Ovary (tissue), 10 donors: ENCODE measurements at regions of chr19 and their contacts with region 1.

Region 1: GRCh38 chr19:531009-531752 is 379 bp upstream of the CDC34 start:
- DNase-seq: peak; percentile 84 to 94 (median 88)
- H3K4me3 ChIP-seq: peak overlapping the region; percentile 60
- H3K27ac ChIP-seq: peak overlapping the region; percentile 74 to 89
- H3K4me1 ChIP-seq: peaks cover 15% of the 10 kb centered on the region
- H3K27me3 ChIP-seq: no peaks in the 10 kb centered on the region
- CTCF ChIP-seq: peak in 2 of 3 donors; percentile 33 to 46
- EP300 ChIP-seq: no peak
- POLR2A ChIP-seq: no peak

Region 2: GRCh38 chr19:570937-571565 is 39.9 kb after region 1 on chr19:
- intact Hi-C with region 1: loop called in 2 of 4 experiments (anchors 2 to 5 kb)
- DNase-seq: peak in 3 of 5 donors; percentile 47 to 57 (median 49)
- H3K4me3 ChIP-seq: peak overlapping the region; percentile 43
- H3K27ac ChIP-seq: peak overlapping the region in 1 of 2 donors; percentile 47
- H3K4me1 ChIP-seq: peaks cover 23% of the 10 kb centered on the region
- H3K27me3 ChIP-seq: no peaks in the 10 kb centered on the region
- CTCF ChIP-seq: no peak
- EP300 ChIP-seq: no peak
- POLR2A ChIP-seq: no peak

Region 3: DNA sequence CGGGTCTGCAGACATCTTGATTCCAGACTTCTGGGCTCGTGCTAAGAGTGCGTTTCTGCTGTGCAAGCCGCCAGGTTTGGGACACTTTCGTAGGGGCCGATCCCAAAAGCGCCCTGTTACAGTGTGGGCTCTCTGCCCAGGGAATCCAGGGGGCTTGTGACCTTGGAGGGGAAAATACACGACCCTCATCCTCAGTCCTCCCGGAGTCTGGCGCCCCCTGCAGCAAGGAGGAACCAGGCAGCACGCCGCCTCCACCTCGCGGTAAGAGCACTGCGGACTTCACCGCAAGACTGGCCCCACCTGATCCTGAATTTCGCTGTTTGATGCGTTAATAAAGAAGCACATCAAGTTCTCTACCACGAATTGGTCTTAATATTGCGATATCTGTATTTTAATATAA is 97.0 kb after region 1 on chr19:
- intact Hi-C with region 1: loop called in 1 of 4 experiments (anchors 10 kb)
- DNase-seq: no peak
- H3K4me3 ChIP-seq: no peak overlapping the region
- H3K27ac ChIP-seq: no peak overlapping the region
- H3K4me1 ChIP-seq: peaks cover 5% of the 10 kb centered on the region
- H3K27me3 ChIP-seq: no peaks in the 10 kb centered on the region
- CTCF ChIP-seq: no peak
- EP300 ChIP-seq: no peak
- POLR2A ChIP-seq: no peak